ENCODE measurements at regions of chr5 and their contacts with region 1.

Region 1: GRCh38 chr5:151115274-151115905 is 34.6 kb upstream of the TNIP1 start:
- DNase-seq: peak; percentile 46 to 93 (median 72)
- ATAC-seq: peak; percentile 96
- H3K4me3 ChIP-seq: no peak overlapping the region
- H3K27ac ChIP-seq: no peak overlapping the region
- H3K4me1 ChIP-seq: peaks cover 0 to 17% of the 10 kb centered on the region in 2 donors
- H3K27me3 ChIP-seq: no peaks in the 10 kb centered on the region
- CTCF ChIP-seq: peak; percentile 86 to 92

Region 2: DNA sequence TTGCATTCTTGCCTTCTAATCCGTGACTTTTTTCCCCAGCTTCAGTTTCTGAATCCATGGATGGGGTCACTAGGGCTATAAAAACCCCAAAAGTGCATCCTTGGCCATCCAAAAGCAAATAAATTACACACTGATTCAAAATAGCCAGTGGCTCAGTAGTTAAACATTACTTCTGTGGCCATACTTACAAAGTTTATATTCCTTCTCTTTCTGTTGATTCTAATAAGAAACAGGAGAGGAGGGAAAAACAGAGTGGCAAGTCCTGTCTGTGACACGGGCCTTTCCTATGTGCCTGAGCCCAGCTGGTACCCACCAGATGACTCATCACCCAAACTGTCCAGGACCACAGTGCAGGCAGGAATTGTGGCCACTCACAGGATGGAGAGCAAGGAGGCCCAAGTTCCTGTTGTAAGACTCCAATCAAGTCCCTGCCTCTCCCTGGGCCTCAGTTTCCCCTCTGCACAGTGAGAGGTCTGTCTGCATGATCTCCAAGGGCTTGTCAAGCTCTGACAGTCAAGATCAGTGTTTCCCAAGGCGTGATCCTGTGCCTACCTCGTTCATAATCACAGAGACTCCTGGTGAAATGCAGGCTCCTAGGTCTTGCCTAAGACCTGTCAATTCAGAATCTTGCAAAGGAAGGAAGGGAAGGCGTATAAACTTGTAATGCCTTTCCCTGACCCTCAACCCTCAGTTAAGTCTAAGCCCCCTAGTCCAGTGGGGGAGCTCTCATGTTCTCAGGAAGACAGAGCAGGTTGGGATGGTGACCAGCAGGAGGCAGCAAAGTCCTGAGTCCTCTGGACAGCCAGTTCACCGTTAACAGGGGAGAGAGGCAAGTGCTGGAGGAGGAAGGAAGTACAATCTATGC is 64.1 kb before region 1 on chr5:
- intact Hi-C with region 1: loop called (anchors 2 to 10 kb)
- DNase-seq: peak; percentile 59 to 85 (median 83)
- ATAC-seq: peak; percentile 95
- H3K4me3 ChIP-seq: no peak overlapping the region
- H3K27ac ChIP-seq: peak overlapping the region in 1 of 2 donors; percentile 73
- H3K4me1 ChIP-seq: peaks cover 3 to 51% of the 10 kb centered on the region in 2 donors
- H3K27me3 ChIP-seq: no peaks in the 10 kb centered on the region
- CTCF ChIP-seq: peak; percentile 84 to 85

Measured in left lung (tissue), 14 donors.